CD4-positive, alpha-beta T cell (primary cell): ENCODE measurements at regions of chr4 and their contacts with region 1.

Region 1: GRCh38 chr4:148015058-148015457 is 283.2 kb downstream of the ARHGAP10 start:
- DNase-seq: no peak
- ATAC-seq: no peak
- H3K4me3 ChIP-seq: no peak overlapping the region
- H3K4me3 Mint-ChIP-seq: no peak overlapping the region
- H3K27ac ChIP-seq: no peak overlapping the region
- H3K27ac Mint-ChIP-seq: no peak overlapping the region
- H3K4me1 ChIP-seq: no peaks in the 10 kb centered on the region
- H3K4me1 Mint-ChIP-seq: no peaks in the 10 kb centered on the region
- H3K27me3 ChIP-seq: no peaks in the 10 kb centered on the region
- H3K27me3 Mint-ChIP-seq: no peaks in the 10 kb centered on the region
- CTCF ChIP-seq: no peak

Region 2: GRCh38 chr4:149264093-149264733 is 1249.2 kb after region 1 on chr4:
- CTCF ChIA-PET with region 1: no interaction called
- POLR2A ChIA-PET with region 1: no interaction called
- intact Hi-C with region 1: loop called (anchors 5 to 10 kb)
- DNase-seq: peak in 4 of 14 experiments; percentile 2 to 37 (median 24)
- ATAC-seq: no peak
- H3K4me3 ChIP-seq: no peak overlapping the region
- H3K4me3 Mint-ChIP-seq: no peak overlapping the region
- H3K27ac ChIP-seq: no peak overlapping the region
- H3K27ac Mint-ChIP-seq: no peak overlapping the region
- H3K4me1 ChIP-seq: no peaks in the 10 kb centered on the region
- H3K4me1 Mint-ChIP-seq: no peaks in the 10 kb centered on the region
- H3K27me3 ChIP-seq: no peaks in the 10 kb centered on the region
- H3K27me3 Mint-ChIP-seq: no peaks in the 10 kb centered on the region
- CTCF ChIP-seq: peak; percentile 41